ENCODE measurements at regions of chr2 and their contacts with region 1.

Region 1: GRCh38 chr2:172172513-172173173 is 69.9 kb upstream of the DLX2 start:
- DNase-seq: peak; percentile 80 to 90 (median 83)
- H3K4me3 ChIP-seq: peak overlapping the region; percentile 50 to 63 (median 58)
- H3K27ac ChIP-seq: no peak overlapping the region
- H3K4me1 ChIP-seq: peaks cover 0 to 11% (median 7%) of the 10 kb centered on the region in 3 donors
- H3K27me3 ChIP-seq: no peaks in the 10 kb centered on the region
- CTCF ChIP-seq: peak; percentile 87

Region 2: DNA sequence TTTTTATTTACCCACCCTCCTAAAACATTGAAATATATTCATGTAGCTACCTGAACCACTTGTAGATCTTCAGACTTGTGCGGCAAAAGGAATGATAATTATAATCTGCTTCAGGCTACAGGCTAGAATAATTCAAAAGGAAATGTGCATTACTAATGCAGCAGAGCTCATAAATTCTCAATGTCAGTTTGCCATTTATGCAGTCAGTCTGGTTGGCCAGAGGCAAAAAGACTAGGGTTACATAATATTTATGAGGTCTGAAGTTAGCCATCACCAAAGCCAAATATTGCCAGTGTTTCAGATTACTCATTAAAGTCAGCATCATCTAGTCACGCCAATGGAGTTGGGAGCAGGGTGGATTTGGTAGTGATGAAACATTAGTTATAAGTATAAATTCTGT is 134.0 kb before region 1 on chr2:
- intact Hi-C with region 1: no loop called
- DNase-seq: no peak
- H3K4me3 ChIP-seq: no peak overlapping the region
- H3K27ac ChIP-seq: no peak overlapping the region
- H3K4me1 ChIP-seq: no peaks in the 10 kb centered on the region
- H3K27me3 ChIP-seq: no peaks in the 10 kb centered on the region
- CTCF ChIP-seq: no peak

Region 3: DNA sequence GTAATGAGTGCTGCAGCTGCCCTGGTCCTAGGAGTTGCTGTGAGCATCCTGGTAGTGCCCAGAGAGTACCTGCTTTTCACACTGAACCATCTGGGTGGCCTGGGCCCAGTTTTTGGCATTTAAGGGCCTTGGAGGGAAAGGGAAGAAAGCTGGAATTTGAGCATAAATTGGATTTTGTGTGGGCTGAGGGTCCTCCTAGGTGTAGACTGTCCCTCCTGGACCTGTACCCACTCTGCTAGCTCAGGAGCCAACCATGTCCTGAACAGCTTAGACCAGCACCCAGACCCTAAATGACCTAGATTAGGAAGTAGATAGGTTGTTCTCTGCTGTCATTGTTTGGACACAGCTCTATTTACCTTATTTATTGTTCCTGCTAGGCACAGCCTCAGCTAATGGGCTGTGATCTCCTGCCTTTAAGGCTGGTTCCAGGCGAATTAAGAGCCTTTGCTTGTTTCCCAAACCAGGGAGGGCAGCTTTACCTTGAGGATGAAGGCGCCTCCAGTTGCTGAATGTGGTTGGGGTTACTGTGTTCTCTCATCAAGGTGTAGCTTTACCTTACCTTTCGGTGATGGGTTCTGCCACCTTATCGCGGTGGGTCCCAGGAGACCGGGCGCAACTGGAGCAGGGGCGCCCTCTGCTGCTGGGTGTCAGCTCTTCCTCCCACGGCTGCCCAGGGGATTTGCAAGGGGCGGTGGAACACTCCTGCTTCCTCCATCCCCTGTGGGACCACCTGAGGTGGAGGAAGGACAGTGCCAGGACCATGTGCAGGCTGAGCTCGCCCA is 289.1 kb after region 1 on chr2:
- intact Hi-C with region 1: loop called (anchors 5 kb)
- DNase-seq: peak; percentile 68 to 83 (median 74)
- H3K4me3 ChIP-seq: peak overlapping the region in 1 of 3 donors; percentile 18
- H3K27ac ChIP-seq: peak overlapping the region in 1 of 2 donors; percentile 47
- H3K4me1 ChIP-seq: peaks cover 0 to 33% (median 24%) of the 10 kb centered on the region in 3 donors
- H3K27me3 ChIP-seq: no peaks in the 10 kb centered on the region
- CTCF ChIP-seq: peak; percentile 72